Ovary (tissue), 10 donors: ENCODE measurements at regions of chr18 and their contacts with region 1.

Region 1: GRCh38 chr18:59980188-59980637 is 80.4 kb downstream of the PMAIP1 start:
- DNase-seq: no peak
- H3K4me3 ChIP-seq: no peak overlapping the region
- H3K27ac ChIP-seq: no peak overlapping the region
- H3K4me1 ChIP-seq: no peaks in the 10 kb centered on the region
- H3K27me3 ChIP-seq: no peaks in the 10 kb centered on the region
- CTCF ChIP-seq: no peak
- EP300 ChIP-seq: no peak
- POLR2A ChIP-seq: no peak

Region 2: GRCh38 chr18:59837586-59837985 is 142.6 kb before region 1 on chr18:
- intact Hi-C with region 1: no loop called
- DNase-seq: peak in 1 of 5 donors; percentile 26
- H3K4me3 ChIP-seq: no peak overlapping the region
- H3K27ac ChIP-seq: no peak overlapping the region
- H3K4me1 ChIP-seq: no peaks in the 10 kb centered on the region
- H3K27me3 ChIP-seq: no peaks in the 10 kb centered on the region
- CTCF ChIP-seq: peak in 2 of 3 donors; percentile 44 to 45
- EP300 ChIP-seq: no peak
- POLR2A ChIP-seq: no peak

Region 3: DNA sequence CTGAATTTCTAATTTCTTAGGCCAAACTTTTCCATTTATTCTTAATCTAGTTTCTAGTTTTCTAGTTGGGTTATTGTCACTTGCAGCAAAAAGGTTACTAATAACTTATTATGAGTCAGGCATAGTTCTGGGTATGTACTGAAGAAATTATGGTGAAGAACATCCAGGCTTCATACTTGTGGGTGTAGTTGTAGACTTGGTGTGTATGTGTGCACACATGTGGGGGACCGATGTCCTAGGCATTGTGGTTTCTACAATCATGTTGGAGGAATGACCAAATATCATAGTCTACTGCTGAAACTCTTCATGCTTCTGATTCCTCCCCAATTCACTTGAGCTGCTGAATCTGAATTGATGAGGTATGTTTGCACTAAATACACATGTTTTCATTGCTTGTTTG is 60.8 kb after region 1 on chr18:
- intact Hi-C with region 1: no loop called
- DNase-seq: no peak
- H3K4me3 ChIP-seq: no peak overlapping the region
- H3K27ac ChIP-seq: no peak overlapping the region
- H3K4me1 ChIP-seq: no peaks in the 10 kb centered on the region
- H3K27me3 ChIP-seq: no peaks in the 10 kb centered on the region
- CTCF ChIP-seq: no peak
- EP300 ChIP-seq: no peak
- POLR2A ChIP-seq: no peak

Region 4: GRCh38 chr18:60228609-60229595 is 248.7 kb after region 1 on chr18:
- intact Hi-C with region 1: loop called in 1 of 4 experiments (anchors 5 kb)
- DNase-seq: no peak
- H3K4me3 ChIP-seq: no peak overlapping the region
- H3K27ac ChIP-seq: no peak overlapping the region
- H3K4me1 ChIP-seq: no peaks in the 10 kb centered on the region
- H3K27me3 ChIP-seq: no peaks in the 10 kb centered on the region
- CTCF ChIP-seq: no peak
- EP300 ChIP-seq: no peak
- POLR2A ChIP-seq: no peak